ENCODE measurements at regions of chr4 and their contacts with region 1.

Region 1: DNA sequence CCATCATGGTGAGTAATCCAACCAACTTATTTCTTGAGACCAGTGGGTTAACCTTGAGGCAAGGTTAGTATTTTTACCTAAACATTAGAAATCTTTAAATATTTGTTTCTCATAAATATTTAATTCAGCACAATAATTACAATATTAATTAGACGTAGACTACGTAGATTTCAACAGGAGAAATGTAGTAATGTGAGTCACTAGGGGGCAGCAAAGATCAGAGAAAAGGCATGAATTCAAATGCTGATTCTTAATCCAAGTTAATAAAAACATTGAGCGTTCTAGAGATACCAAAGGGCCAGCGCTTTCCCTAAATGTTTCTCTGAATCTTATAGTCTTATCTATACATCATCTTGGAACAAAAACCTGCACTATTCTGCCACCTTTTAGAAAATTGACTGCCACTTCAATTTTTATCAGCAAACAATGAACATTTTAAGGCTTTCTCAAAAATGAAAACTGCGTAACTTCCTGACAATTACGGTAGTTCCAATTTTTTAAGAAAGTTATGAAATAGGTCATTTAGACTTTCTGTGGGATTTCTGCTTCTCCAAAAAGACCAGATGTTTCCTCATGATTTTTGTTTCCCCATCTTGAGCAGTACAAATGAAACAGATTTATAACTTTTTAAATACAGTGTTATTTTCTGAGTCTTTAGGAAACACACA is 180.7 kb downstream of the GASK1B start:
- DNase-seq: no peak
- H3K4me3 ChIP-seq: peak overlapping the region; percentile 57
- H3K27ac ChIP-seq: peak overlapping the region; percentile 77
- H3K4me1 ChIP-seq: peaks cover 31% of the 10 kb centered on the region
- H3K27me3 ChIP-seq: no peaks in the 10 kb centered on the region
- CTCF ChIP-seq: peak; percentile 79

Region 2: DNA sequence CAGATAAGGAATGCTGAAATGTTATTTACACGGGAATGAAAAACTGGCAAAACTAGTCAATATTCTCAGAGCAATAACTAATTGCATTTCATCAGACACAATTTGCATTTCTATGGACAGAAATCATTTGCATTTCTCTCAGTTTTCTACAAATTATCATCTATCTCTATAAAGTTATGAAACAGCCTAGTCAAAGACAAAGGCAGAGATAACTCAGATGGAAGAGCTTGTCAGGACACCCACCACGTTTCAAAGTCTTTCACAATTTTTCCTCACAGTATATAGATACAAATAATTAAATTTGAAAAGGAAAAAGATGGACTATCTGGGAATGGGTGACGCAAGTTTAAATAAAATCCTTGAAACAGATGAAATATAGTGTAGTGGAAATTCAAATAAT is 50.2 kb before region 1 on chr4:
- intact Hi-C with region 1: no loop called
- DNase-seq: no peak
- H3K4me3 ChIP-seq: no peak overlapping the region
- H3K27ac ChIP-seq: no peak overlapping the region
- H3K4me1 ChIP-seq: no peaks in the 10 kb centered on the region
- H3K27me3 ChIP-seq: no peaks in the 10 kb centered on the region
- CTCF ChIP-seq: no peak

Region 3: DNA sequence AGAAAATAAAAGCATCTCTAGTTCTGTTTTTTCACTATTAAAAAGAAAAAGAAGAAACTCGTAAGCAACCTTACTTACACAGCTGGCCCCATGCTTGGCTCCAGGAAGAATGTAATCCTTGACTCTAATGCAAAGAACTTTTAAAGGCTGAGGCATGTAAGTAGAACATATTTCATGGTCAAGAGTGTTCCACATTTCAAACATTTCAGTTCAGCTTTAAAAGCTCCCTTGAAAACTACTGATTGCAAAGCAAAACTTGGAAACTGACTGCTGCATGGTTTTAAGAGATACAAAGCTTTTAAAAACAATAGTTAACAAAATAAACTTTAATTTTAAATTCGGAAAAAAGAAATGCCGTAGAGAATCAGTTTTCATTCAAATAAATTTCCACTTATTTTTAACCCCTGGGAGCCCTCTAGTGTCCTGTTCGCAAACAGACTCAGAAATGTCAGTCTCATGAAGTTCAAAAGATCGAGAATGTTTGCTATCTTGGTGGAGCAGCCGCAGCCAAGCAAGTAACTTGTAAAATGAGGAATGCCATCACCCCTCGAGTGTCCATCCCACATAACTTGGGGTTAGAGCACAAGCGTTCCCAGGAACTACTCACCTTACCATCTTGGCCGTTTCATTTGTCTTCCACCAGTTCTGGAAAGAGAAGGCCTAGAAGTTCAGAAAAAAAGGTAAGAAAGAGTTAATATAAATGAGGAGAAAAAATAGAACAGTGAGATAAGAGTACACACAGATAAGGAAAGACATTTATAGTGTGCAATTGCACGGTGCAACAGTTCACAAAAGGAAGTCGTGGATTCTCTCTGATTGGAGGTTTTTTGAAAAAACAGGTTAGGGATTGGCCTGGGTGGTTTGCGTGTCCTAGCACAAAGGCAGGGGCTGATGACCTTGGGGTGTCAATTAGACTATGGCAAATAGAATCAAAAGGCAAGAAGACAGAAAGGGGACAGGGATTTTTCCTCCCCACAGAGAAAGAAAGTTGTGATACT is 180.4 kb after region 1 on chr4 and contains the start of gene GASK1B:
- intact Hi-C with region 1: loop called (anchors 5 kb)
- DNase-seq: no peak
- H3K4me3 ChIP-seq: peak within 1 kb of the TSS; percentile 82
- H3K27ac ChIP-seq: peak within 1 kb of the TSS; percentile 93
- H3K4me1 ChIP-seq: peaks cover 92% of the 10 kb centered on the region
- H3K27me3 ChIP-seq: no peaks in the 10 kb centered on the region
- CTCF ChIP-seq: peak; percentile 76
- total RNA-seq, gene GASK1B: 61.9 TPM

Region 4: DNA sequence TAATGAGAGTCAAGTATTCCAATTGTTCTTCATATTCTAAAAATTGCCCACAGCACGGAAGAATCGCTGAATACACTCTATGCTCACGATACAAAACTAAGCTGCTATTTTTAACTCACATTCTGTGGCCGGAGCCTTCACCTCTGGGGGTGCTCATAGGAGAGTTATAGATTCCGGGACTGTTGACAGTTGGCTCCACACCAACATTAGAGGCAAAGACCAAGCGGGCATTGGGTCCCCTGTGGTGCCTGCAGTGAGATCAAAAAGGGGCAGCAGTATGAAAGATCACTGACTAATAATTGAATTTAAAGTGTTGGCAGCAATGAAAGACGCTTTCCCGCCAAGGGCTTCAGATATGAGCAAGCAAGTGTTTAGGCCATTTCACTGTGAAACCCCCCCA is 364.1 kb after region 1 on chr4:
- intact Hi-C with region 1: no loop called
- DNase-seq: no peak
- H3K4me3 ChIP-seq: no peak overlapping the region
- H3K27ac ChIP-seq: no peak overlapping the region
- H3K4me1 ChIP-seq: no peaks in the 10 kb centered on the region
- H3K27me3 ChIP-seq: no peaks in the 10 kb centered on the region
- CTCF ChIP-seq: no peak

Measured in left ventricle myocardium inferior (tissue), 1 donor.